B cell (primary cell): ENCODE measurements at regions of chr14 and their contacts with region 1.

Region 1: DNA sequence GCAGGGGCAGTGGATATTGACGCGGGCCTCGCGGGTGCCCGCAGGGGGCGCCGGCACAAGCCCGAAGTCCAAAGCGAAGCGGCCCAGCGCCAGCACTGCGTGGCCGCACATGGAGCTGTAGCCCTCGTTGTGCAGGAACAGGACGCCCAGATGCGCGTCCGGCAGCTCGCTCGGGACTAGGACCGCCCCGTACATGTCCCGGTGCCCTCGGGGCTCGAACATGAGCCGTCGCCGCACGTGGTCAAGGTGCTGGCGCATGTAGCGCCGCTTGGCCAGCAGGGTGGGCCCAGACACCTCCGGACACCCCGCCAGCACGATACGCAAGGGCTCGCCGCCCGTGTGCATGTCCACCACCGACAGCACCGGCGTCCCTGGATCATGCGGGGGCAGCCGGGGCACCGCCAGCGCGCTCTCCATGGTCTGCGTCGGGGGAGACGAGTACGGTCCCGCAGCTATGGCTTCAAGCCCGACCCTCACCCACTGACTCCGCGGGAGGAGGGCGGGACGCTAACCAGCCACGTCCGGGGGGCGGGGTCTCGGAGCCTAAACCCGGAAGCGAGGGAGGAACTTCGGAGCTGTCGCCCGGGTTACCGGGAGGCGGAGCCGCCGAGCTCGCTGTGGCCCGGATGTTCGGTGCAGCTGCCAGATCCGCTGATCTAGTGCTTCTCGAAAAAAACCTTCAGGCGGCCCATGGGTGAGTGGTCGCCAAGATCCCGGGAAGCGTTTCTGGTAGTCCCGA is at the starts of genes JKAMP and L3HYPDH:
- DNase-seq: peak; percentile 96
- ATAC-seq: peak; percentile 92
- H3K4me3 ChIP-seq: peak within 1 kb of the TSS; percentile 83 to 97 (median 93)
- H3K4me3 Mint-ChIP-seq: peak within 1 kb of the TSS; percentile 96
- H3K27ac ChIP-seq: peak within 1 kb of the TSS; percentile 57 to 79
- H3K27ac Mint-ChIP-seq: peak within 1 kb of the TSS; percentile 90
- H3K4me1 ChIP-seq: peaks cover 36 to 40% of the 10 kb centered on the region in 2 donors
- H3K4me1 Mint-ChIP-seq: peaks cover 56% of the 10 kb centered on the region
- H3K27me3 ChIP-seq: no peaks in the 10 kb centered on the region
- H3K27me3 Mint-ChIP-seq: no peaks in the 10 kb centered on the region
- CTCF ChIP-seq: peak; percentile 70
- total RNA-seq, gene JKAMP: 25.7 and 30.3 TPM in 2 replicates
- total RNA-seq, gene L3HYPDH: 67.3 and 74.5 TPM in 2 replicates

Region 2: DNA sequence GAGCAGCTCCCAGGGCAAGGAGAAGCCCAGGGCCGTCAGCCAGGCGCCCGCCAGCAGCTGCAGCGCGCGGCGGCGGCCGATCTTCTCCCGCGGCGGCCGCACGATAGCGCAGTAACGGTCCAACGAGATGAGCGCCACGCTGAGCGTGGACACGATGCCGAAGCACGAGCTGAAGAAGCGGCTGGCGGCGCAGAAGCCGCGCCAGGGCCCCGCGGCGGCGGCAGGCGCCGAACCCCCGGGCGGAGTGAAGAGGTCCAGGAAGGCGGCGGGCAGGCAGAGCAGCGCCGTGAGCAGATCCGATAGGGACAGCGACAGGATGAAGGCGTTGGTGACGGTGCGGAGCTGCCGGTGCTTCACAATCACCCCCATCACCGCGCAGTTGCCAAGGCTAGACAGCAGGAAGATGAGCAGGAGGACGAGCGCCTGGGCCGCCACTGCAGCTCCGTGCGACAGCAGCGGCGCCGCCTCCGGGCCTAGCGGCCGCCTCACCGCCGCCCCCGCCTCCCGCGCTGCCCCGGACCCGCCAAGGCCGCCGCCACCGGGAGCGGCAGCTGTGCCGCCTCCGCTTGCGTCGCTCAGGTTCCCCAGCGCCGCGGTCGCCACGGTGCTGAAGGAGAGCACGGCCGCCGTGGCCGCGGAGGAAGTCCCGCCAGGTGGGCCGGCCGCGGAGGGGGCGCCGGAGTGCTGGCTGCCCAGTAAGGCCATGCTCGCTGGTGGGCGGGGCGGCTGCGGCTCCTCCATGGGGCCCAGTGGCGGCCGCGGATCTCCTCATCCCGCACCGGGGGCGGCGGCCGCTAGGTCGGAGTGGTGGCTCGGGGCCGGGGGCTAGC is 19.4 kb before region 1 on chr14:
- CTCF ChIA-PET with region 1: interaction called, 35 read pairs
- POLR2A ChIA-PET with region 1: interaction called, 12 read pairs
- intact Hi-C with region 1: loop called (anchors 1 kb)
- DNase-seq: peak; percentile 77
- ATAC-seq: peak; percentile 76
- H3K4me3 ChIP-seq: peak overlapping the region in 4 of 5 experiments; percentile 37 to 70 (median 60)
- H3K4me3 Mint-ChIP-seq: peak overlapping the region; percentile 94
- H3K27ac ChIP-seq: no peak overlapping the region
- H3K27ac Mint-ChIP-seq: peak overlapping the region; percentile 89
- H3K4me1 ChIP-seq: peaks cover 12% of the 10 kb centered on the region in 2 donors
- H3K4me1 Mint-ChIP-seq: peaks cover 18% of the 10 kb centered on the region
- H3K27me3 ChIP-seq: peaks cover 0 to 6% (median 6%) of the 10 kb centered on the region in 4 experiments
- H3K27me3 Mint-ChIP-seq: no peaks in the 10 kb centered on the region
- CTCF ChIP-seq: no peak